ENCODE measurements at regions of chrX and their contacts with region 1.

Region 1: GRCh38 chrX:318739-319578 is at the start of gene GTPBP6:
- DNase-seq: peak; percentile 99 to 100
- ATAC-seq: peak; percentile 89 to 96 (median 93)
- H3K4me3 ChIP-seq: peak within 1 kb of the TSS; percentile 76 to 100 (median 94)
- H3K27ac ChIP-seq: peak within 1 kb of the TSS; percentile 91 to 98 (median 95)
- H3K4me1 ChIP-seq: peaks cover 9 to 30% (median 20%) of the 10 kb centered on the region in 9 donors
- H3K27me3 ChIP-seq: peaks cover 0 to 1% (median under 1%) of the 10 kb centered on the region in 7 donors
- CTCF ChIP-seq: peak in 5 of 9 donors; percentile 28 to 53 (median 40)
- total RNA-seq, gene GTPBP6: 29.8 to 55.4 (median 46.3) TPM

Region 2: GRCh38 chrX:275967-276580 is 42.9 kb before region 1 on chrX:
- intact Hi-C with region 1: loop called in 1 of 10 experiments (anchors 5 kb)
- DNase-seq: peak; percentile 78 to 86
- ATAC-seq: peak; percentile 94 to 98 (median 97)
- H3K4me3 ChIP-seq: peak overlapping the region; percentile 47 to 65 (median 57)
- H3K27ac ChIP-seq: peak overlapping the region; percentile 30 to 82 (median 52)
- H3K4me1 ChIP-seq: peaks cover 0 to 23% (median 14%) of the 10 kb centered on the region in 9 donors
- H3K27me3 ChIP-seq: peaks cover 0 to 14% (median 0%) of the 10 kb centered on the region in 7 donors
- CTCF ChIP-seq: peak in 5 of 9 donors; percentile 13 to 38 (median 25)

Region 3: GRCh38 chrX:363621-364375 is 44.8 kb after region 1 on chrX:
- intact Hi-C with region 1: no loop called
- DNase-seq: no peak
- ATAC-seq: no peak
- H3K4me3 ChIP-seq: no peak overlapping the region
- H3K27ac ChIP-seq: no peak overlapping the region
- H3K4me1 ChIP-seq: no peaks in the 10 kb centered on the region
- H3K27me3 ChIP-seq: no peaks in the 10 kb centered on the region
- CTCF ChIP-seq: no peak

Region 4: DNA sequence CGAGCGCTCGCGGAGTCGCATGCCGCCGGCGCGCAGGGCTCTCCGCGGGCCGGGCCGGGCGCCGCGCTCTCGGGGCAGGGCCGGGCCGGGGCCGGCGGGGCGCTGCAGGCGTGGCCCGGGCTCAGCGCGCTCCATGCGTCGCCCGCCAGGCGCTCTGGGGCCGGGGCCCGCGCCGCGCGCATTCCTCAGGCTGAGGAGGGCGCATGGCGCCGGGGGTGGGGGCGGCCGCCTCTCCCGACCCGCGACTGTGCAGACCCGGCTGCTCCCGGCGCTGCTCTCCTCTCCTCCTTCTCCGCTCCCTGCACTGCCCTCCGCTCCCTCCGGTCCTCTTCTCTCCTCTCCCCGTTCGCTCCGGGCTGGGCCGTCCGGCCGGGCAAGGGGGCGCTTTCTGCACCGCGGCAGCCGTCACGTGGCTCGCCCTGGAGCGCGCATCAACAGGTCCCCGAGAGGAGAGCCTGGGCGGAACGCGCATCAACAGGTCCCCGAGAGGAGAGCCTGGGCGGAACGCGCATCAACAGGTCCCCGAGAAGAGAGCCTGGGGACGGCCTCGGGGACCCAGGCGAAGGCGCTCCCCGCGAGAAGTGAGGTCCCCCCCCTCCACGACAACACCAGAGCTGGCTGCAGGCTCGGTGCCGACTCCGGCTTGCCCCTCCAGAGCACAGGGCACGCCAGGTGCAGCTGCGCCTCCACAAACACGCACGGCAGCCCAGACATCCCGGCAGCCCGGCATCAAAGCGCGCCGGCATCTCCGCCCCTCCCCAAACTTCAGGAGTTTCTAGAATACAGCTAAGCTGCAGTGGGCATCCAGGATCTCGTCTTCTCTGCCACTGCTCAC is 54.9 kb after region 1 on chrX:
- intact Hi-C with region 1: no loop called
- DNase-seq: peak in 1 of 2 donors; percentile 55
- ATAC-seq: peak; percentile 18 to 49 (median 34)
- H3K4me3 ChIP-seq: peak overlapping the region; percentile 21 to 62 (median 51)
- H3K27ac ChIP-seq: peak overlapping the region in 9 of 10 donors; percentile 33 to 93 (median 83)
- H3K4me1 ChIP-seq: peaks cover 0 to 52% (median 24%) of the 10 kb centered on the region in 9 donors
- H3K27me3 ChIP-seq: peaks cover 0 to 41% (median 14%) of the 10 kb centered on the region in 7 donors
- CTCF ChIP-seq: no peak

Region 5: GRCh38 chrX:386768-387575 is 68.0 kb after region 1 on chrX and contains the start of gene PPP2R3B:
- intact Hi-C with region 1: loop called in 1 of 10 experiments (anchors 2 kb)
- DNase-seq: peak; percentile 99 to 100
- ATAC-seq: peak; percentile 100
- H3K4me3 ChIP-seq: peak within 1 kb of the TSS; percentile 42 to 99 (median 74)
- H3K27ac ChIP-seq: peak within 1 kb of the TSS; percentile 94 to 100 (median 99)
- H3K4me1 ChIP-seq: peaks cover 0 to 15% (median 8%) of the 10 kb centered on the region in 9 donors
- H3K27me3 ChIP-seq: no peaks in the 10 kb centered on the region
- CTCF ChIP-seq: no peak
- total RNA-seq, gene PPP2R3B: 88.3 to 173 (median 128) TPM